Caco-2 (cell line): ENCODE measurements at regions of chr21 and their contacts with region 1.

Region 1: DNA sequence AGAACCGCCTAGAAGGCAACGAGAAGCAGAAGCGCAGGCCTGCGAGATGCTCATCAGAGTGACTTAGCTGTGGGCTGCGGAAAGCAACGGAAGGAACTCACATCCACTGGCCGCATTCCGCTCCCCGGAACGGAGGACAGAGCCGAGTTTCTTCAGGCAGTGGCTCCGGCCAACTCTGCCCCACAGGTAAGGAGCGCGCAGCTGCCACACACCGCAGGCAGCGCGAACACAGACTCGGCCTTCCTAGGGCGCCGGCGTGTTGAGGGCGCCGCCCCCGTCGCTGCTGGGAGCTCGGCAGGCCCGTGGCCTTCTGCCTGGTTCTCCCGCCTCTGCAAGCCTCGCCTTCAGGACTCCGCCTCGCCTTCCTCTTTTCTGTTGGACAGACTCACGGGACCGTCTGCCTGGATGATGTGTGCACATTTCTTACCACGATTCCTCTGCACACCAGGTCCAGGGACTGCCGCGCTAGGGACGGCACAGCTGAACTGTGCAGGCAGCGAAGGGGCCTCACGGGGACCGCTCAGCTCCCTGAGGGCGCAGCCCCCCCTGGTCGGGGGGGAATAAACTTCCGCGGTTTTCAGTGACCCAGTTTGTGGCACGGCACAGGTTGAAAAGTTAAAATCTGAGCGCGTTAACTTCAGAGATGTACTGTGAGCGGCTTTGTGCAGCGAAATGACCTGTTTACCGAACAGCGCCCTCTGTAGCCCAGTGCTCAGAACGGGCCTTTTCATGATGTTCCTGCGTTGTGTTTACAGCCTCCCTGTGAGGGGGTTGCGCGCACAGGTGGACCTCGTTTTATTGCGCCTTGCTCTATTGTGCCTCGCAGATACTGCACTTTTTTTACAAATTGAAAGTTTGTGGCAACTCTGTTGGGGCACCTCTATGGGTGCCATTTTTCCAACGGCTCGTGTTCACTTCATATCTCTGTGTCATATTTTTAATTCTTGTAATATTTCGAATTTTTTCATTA is 15.8 kb downstream of the TCP10L start:
- DNase-seq: peak; percentile 77 to 81
- H3K4me3 ChIP-seq: peak overlapping the region; percentile 51
- H3K4me3 Mint-ChIP-seq: peak overlapping the region; percentile 92
- H3K27ac Mint-ChIP-seq: no peak overlapping the region
- H3K4me1 ChIP-seq: peaks cover 5% of the 10 kb centered on the region; the same call in 1 of the 2 replicates
- H3K4me1 Mint-ChIP-seq: no peaks in the 10 kb centered on the region
- H3K27me3 ChIP-seq: no peaks in the 10 kb centered on the region
- H3K27me3 Mint-ChIP-seq: no peaks in the 10 kb centered on the region
- CTCF ChIP-seq: peak; percentile 76 to 79

Region 2: GRCh38 chr21:32403201-32403777 is 166.3 kb before region 1 on chr21:
- CTCF ChIA-PET with region 1: interaction called, 8 read pairs
- POLR2A ChIA-PET with region 1: no interaction called
- intact Hi-C with region 1: loop called (anchors 10 kb)
- DNase-seq: peak; percentile 53 to 74
- H3K4me3 ChIP-seq: no peak overlapping the region
- H3K4me3 Mint-ChIP-seq: no peak overlapping the region
- H3K27ac Mint-ChIP-seq: no peak overlapping the region
- H3K4me1 ChIP-seq: no peaks in the 10 kb centered on the region
- H3K4me1 Mint-ChIP-seq: no peaks in the 10 kb centered on the region
- H3K27me3 ChIP-seq: no peaks in the 10 kb centered on the region; the same call in 1 of the 2 replicates
- H3K27me3 Mint-ChIP-seq: peaks cover 6% of the 10 kb centered on the region
- CTCF ChIP-seq: peak; percentile 66 to 69

Region 3: GRCh38 chr21:33522953-33523349 is 953.4 kb after region 1 on chr21:
- CTCF ChIA-PET with region 1: no interaction called
- POLR2A ChIA-PET with region 1: no interaction called
- intact Hi-C with region 1: no loop called
- DNase-seq: no peak
- H3K4me3 ChIP-seq: no peak overlapping the region
- H3K4me3 Mint-ChIP-seq: no peak overlapping the region
- H3K27ac Mint-ChIP-seq: peak overlapping the region; percentile 32
- H3K4me1 ChIP-seq: no peaks in the 10 kb centered on the region
- H3K4me1 Mint-ChIP-seq: no peaks in the 10 kb centered on the region
- H3K27me3 ChIP-seq: no peaks in the 10 kb centered on the region
- H3K27me3 Mint-ChIP-seq: no peaks in the 10 kb centered on the region
- CTCF ChIP-seq: no peak